Aorta (tissue), 5 donors: ENCODE measurements at regions of chr14 and their contacts with region 1.

Region 1: DNA sequence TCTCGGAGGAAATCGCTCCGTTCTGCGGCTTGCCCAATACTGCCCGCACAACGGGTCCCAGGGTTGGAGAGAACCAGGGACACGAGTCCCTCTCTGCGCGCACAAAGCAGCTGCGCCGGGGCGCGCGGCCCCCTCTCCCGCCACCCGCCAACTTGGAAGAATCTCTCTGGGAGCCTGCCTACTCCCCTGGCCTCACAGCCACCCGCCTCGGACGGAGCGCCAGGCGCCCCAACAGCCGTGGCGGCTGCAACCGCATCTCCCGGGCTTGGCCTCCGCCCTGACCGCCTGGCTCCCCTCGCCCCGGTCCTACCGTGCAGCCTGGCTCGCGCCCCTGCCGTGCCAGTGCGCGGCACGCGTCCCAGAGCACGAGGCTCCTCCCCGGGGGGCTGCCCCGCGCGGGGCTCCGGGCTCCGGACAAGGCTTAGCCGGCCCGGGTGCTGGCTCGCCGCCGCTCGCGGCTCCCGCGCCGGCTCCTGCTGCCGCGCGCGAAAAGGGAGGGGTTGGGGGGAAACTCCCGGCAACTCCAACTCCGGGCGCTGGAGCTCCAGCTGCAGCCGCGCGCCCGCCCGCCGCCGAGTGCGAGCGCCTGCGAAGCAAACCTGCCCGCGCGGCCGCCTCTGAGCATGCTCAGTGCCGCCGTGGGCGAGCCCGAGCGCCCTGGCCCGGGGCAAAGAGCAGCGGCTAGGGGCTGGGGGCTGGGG is at the start of gene STXBP6:
- DNase-seq: peak; percentile 62 to 84
- ATAC-seq: peak; percentile 79
- H3K4me3 ChIP-seq: peak within 1 kb of the TSS; percentile 8 to 82
- H3K27ac ChIP-seq: no peak within 1 kb of the TSS
- H3K4me1 ChIP-seq: no peaks in the 10 kb centered on the region
- H3K27me3 ChIP-seq: no peaks in the 10 kb centered on the region
- total RNA-seq, gene STXBP6: 1.8 to 2.8 TPM

Region 2: DNA sequence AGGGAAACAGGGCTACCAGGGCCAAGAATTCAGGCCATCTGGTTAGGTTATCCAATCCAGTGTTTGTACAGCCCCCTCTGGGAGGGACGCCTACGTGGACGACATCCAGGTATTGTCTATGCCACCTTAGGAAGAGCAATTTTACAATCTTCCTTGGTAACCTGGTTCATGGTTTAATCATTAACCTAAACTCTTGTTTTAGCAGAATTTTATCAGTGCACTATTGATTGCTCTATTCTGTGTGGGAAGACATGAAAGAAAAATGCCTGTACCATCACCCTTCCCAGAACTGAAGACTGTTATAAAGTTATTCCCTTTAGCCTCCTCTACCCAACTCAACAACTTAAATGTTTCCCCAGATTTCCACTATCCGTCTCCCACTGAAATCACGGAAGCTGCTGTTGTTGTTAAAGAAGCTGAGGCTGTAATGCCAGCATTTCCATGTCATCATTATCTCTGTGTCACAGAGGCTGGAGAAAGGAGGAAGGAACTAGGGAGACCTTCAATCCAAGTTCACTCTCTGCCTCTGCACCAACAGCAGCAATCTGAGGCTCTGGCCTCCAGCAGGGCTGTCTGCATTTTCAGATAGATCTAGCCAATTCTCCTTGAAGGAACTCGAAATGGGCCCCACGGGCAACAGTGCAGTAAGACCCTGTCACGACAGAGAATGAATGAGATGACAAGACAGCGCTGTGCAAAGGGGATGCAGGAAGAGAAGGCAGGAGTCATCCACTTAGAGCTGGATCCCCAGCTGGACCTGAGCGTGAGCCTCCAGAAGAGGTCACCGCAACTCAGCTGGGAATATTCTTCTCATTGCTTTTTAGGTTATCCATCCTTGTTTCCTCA is 232.3 kb before region 1 on chr14:
- intact Hi-C with region 1: loop called in 1 of 2 experiments (anchors 10 kb)
- DNase-seq: no peak
- ATAC-seq: no peak
- H3K4me3 ChIP-seq: no peak overlapping the region
- H3K27ac ChIP-seq: no peak overlapping the region
- H3K4me1 ChIP-seq: no peaks in the 10 kb centered on the region
- H3K27me3 ChIP-seq: no peaks in the 10 kb centered on the region

Region 3: DNA sequence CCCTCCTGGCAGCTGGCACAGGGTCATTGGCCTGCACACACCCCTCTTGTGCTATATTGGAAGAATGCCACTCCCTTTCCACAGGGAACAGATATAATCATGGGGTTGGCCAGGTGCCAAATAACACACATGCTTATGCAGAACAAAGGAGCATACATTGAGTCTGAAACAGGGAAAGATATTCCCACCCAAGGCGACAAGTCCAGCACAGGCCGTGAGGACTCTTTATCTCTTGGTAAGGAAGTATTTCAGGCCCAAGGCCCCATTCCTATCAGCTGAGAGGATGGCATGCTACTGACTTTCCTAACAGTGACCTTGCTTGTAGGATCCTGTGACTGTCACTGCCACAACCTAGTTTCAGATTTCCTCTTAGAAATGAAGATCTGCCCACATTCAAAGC is 59.2 kb after region 1 on chr14:
- intact Hi-C with region 1: no loop called
- DNase-seq: no peak
- ATAC-seq: no peak
- H3K4me3 ChIP-seq: no peak overlapping the region
- H3K27ac ChIP-seq: no peak overlapping the region
- H3K4me1 ChIP-seq: peaks cover 0 to 3% of the 10 kb centered on the region in 2 donors
- H3K27me3 ChIP-seq: no peaks in the 10 kb centered on the region